PC-9 (cell line): ENCODE measurements at regions of chr12 and their contacts with region 1.

Region 1: DNA sequence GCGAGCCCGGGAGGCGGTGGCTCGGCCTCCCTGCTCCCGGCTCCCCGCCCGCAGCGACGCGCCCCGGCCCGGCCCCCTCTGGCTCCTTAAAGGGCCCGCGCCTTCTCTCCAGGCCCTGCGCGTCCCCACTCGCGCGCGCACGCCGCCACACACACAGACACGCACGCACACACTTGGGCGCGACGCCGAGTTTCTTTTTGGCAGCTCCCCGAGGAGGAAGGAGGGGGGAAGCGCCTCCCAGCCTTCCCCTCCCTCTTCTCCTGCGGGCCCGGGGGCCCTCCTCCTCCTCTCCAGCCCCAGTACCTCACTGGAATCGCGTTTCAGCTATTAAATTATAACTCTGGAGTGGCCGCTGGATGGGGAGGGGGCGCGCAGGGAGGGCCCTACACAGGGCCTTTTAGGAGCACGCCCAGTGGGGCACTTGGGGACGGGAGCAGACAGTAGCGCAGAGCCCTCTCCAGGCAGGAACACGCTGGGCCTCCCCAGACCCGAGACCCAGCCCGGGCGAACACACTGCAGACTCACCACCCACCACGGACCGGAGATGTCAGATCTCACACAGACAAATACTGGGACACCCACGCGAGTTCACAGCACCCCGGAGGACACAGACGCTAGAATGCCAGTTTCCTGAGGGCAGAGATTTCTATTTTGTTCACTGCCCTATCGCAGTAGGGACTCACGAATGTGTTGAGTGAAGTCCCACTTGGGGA is 405 bp upstream of the NCOR2 start:
- DNase-seq: peak in 1 of 2 experiments; percentile 75
- H3K4me3 ChIP-seq: peak overlapping the region; percentile 56
- H3K27ac ChIP-seq: no peak overlapping the region
- H3K4me1 ChIP-seq: peaks cover 10% of the 10 kb centered on the region
- H3K27me3 ChIP-seq: no peaks in the 10 kb centered on the region
- CTCF ChIP-seq: no peak

Region 2: DNA sequence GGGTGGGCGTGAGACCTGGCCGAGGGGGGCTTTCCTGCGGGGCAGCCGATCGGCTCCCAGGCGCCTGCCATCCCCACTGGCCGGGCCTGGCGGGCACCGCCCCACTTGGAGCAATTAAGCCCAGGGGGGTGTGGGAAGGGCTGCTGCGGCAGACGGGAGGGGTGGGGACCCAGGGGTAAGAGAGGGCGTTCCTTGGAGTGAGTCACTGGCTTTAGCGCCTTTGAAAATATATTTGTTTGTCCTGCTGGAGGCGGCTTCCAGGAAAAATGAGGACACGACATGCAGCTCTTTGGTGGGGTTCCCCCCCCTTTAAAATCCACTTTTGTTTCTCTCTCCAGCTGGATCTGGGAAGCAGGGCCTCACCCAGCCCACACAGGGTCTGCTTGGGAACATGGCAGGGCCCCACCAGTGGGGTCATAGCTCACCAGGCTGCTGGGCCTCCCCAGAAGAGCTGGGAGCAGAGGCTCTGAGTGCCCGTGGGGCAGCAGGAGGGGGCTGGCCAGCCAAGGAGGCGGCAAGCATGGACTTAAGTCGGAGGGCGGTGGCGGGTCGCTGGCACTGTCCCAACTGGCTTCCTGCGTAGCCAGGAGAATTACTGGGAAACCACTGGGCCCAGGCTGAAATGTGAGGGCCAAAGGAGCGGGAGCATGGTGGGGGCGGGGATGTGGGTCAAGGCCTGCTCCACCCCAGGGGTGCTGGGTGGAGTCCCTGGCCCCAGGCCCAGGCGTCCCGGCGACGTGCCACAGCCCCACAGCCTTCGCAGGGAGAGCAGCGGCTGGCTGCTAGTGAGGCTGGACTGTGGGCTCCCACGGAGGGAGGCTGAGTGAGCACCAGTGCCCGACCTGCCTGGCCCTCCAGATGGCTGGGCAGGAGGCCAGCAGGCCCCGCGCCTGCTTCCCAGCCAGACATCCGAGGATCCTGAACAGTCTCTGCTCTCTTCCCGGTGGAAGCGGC is 145.0 kb before region 1 on chr12:
- CTCF ChIA-PET with region 1: no interaction called
- POLR2A ChIA-PET with region 1: no interaction called
- intact Hi-C with region 1: loop called (anchors 2 kb)
- DNase-seq: peak; percentile 84 to 96
- H3K4me3 ChIP-seq: peak overlapping the region; percentile 49; the same call in 1 of the 2 replicates
- H3K27ac ChIP-seq: peak overlapping the region; percentile 91
- H3K4me1 ChIP-seq: peaks cover 32% of the 10 kb centered on the region
- H3K27me3 ChIP-seq: no peaks in the 10 kb centered on the region
- CTCF ChIP-seq: no peak

Region 3: DNA sequence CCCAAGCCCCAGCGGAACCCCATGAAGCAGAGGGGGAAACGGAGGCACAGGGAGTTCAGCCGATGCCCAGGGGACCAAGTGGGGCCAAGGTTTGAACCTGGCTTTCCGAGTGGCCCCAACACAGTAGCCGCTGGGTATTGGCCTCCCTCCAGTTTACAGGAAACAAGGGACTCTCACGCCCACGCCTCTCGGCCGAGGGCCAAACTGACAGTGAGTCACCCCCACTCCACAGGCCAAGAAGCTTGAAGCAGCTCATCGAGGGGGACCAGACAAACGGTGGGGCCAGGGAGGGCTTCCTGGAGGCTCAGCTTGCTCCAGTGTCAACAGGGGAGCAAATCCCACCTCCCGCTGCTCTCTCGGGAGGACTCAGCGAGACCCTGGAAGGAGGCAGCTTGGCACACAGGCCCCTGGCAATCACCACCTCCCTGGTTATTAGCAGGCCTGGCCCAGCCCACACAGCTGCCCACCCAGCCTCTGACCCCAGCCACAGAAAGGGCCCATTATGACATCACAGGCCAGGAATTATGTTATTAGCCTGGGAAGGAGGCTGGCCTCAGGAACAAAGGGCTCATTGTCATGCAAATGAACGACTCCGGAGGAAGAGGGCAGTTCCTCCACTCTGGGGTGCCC is 55.0 kb before region 1 on chr12:
- CTCF ChIA-PET with region 1: interaction called, 3 read pairs
- POLR2A ChIA-PET with region 1: no interaction called
- intact Hi-C with region 1: loop called (anchors 2 kb)
- DNase-seq: peak; percentile 89 to 92
- H3K4me3 ChIP-seq: peak overlapping the region; percentile 39; the same call in 1 of the 2 replicates
- H3K27ac ChIP-seq: peak overlapping the region; percentile 77
- H3K4me1 ChIP-seq: peaks cover 79% of the 10 kb centered on the region
- H3K27me3 ChIP-seq: no peaks in the 10 kb centered on the region
- CTCF ChIP-seq: no peak

Region 4: GRCh38 chr12:124599074-124599999 is 31.5 kb after region 1 on chr12:
- CTCF ChIA-PET with region 1: no interaction called
- POLR2A ChIA-PET with region 1: no interaction called
- intact Hi-C with region 1: no loop called
- DNase-seq: peak in 1 of 2 experiments; percentile 81
- H3K4me3 ChIP-seq: no peak overlapping the region
- H3K27ac ChIP-seq: peak overlapping the region; percentile 39
- H3K4me1 ChIP-seq: peaks cover 19% of the 10 kb centered on the region
- H3K27me3 ChIP-seq: no peaks in the 10 kb centered on the region
- CTCF ChIP-seq: peak; percentile 40; the same call in 1 of the 2 replicates

Region 5: DNA sequence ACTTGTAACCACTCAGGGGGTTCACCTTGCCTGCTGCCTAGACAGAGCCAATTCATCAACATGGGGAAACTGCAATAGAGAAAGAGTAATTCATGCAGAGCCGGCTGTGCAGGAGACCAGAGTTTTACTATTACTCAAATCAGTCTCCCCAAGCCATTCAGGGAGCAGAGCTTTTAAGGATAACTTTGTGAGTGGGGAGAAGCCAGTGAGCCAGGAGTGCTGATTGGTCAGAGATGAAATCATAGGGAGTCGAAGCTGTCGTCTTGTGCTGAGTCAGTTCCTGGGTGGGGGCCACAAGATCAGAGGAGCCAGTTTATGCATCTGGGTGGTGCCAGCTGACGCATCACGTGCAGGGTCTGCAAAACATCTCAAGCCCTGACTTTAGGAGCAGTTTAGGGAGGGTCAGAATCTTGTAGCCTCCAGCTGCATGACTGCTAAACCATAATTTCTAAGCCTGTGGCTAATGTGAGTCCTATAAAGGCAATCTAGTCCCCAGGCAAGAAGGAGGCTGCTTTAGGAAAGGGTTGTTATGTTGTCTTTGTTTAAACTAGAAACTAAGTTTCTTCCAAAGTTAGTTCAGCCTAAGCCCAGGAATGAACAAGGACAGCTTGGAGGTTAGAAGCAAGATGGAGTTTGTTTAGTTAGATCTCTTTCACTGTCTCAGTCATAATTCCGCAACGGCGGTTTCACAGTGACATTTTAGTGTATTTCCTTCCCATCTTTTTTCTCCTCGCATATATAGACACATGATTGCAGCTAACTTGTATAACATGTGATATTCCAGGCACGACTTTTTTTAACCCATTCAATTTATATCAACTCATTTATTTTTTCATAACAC is 68.5 kb after region 1 on chr12:
- CTCF ChIA-PET with region 1: no interaction called
- POLR2A ChIA-PET with region 1: no interaction called
- intact Hi-C with region 1: loop called (anchors 1 kb)
- DNase-seq: peak in 1 of 2 experiments; percentile 59
- H3K4me3 ChIP-seq: no peak overlapping the region
- H3K27ac ChIP-seq: peak overlapping the region; percentile 96
- H3K4me1 ChIP-seq: peaks cover 93% of the 10 kb centered on the region
- H3K27me3 ChIP-seq: no peaks in the 10 kb centered on the region
- CTCF ChIP-seq: no peak

Region 6: DNA sequence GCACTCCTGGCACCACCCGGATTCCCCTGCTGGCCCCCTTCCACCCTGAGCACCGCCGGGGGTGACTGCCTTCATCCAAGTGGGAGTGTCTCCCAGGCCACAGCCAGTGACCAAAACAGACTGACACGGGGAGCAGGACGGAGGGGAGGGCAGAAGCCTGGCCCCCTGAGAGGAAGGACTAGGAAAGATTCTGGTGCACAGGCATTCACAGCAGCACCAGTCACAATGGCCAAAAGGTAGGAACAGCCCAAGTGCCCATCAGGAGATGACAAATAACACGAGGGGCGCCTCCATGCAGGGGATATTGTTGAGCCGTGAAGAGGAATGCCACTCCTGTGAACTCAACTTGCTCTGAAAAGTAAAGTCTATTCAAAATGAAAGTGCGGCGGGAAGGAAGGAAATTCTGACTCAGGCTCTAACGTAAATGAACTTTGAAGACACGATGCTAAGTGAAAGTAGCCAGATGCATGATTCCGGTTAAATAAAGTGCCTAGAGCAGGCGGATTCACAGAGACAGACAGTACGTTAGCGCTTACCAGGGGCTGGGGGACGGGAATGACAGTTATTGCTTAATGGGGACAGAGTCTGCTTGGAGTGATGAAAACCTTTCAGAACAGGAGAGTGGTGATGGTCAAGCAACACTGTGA is 145.7 kb after region 1 on chr12:
- CTCF ChIA-PET with region 1: no interaction called
- POLR2A ChIA-PET with region 1: no interaction called
- intact Hi-C with region 1: loop called (anchors 1 kb)
- DNase-seq: peak in 1 of 2 experiments; percentile 62
- H3K4me3 ChIP-seq: no peak overlapping the region
- H3K27ac ChIP-seq: no peak overlapping the region
- H3K4me1 ChIP-seq: peaks cover 26% of the 10 kb centered on the region
- H3K27me3 ChIP-seq: no peaks in the 10 kb centered on the region
- CTCF ChIP-seq: no peak